Activated CD8-positive, alpha-beta T cell treated with anti-CD3 and anti-CD28 coated beads for 36 hours (primary cell): ENCODE measurements at regions of chr19 and their contacts with region 1.

Region 1: DNA sequence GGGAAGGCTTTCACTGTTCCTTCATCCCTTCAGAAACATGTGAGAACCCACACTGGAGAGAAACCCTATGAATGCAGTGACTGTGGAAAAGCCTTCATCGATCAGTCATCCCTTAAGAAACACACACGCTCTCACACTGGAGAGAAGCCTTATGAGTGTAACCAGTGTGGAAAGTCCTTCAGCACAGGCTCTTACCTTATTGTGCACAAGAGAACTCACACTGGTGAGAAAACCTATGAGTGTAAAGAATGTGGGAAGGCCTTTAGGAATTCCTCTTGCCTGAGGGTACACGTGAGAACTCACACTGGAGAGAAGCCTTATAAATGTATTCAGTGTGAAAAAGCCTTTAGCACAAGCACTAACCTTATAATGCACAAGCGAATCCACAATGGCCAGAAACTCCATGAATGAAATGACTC is 18.6 kb downstream of the ZNF177 start:
- DNase-seq: no peak
- ATAC-seq: no peak
- H3K4me3 Mint-ChIP-seq: no peak overlapping the region
- H3K27ac Mint-ChIP-seq: no peak overlapping the region
- H3K4me1 Mint-ChIP-seq: no peaks in the 10 kb centered on the region
- H3K27me3 Mint-ChIP-seq: no peaks in the 10 kb centered on the region
- CTCF ChIP-seq: no peak

Region 2: DNA sequence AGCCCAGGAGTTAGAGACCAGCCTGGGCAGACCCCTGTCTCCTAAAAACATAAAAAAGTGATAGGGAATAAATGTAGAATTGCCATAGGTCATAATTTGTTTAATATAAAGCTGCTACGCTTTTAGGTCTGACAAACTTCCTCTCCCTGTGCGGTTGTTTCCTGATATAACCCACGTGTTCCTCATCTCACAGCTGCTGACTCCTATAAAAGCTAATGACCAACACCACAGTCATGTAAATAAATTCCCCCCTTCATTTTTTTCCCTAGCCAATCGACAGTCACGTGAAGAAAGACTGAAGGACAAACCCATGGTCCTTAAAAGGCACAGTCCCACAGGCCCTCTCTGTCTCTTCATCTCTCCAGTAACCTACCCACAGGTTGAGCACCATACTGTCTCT is 26.5 kb after region 1 on chr19:
- CTCF ChIA-PET with region 1: no interaction called
- POLR2A ChIA-PET with region 1: no interaction called
- intact Hi-C with region 1: loop called (anchors 2 kb)
- DNase-seq: no peak
- ATAC-seq: no peak
- H3K4me3 Mint-ChIP-seq: peak overlapping the region; percentile 76
- H3K27ac Mint-ChIP-seq: no peak overlapping the region
- H3K4me1 Mint-ChIP-seq: peaks cover 9% of the 10 kb centered on the region
- H3K27me3 Mint-ChIP-seq: no peaks in the 10 kb centered on the region
- CTCF ChIP-seq: no peak

Region 3: GRCh38 chr19:9721861-9722260 is 340.5 kb after region 1 on chr19:
- CTCF ChIA-PET with region 1: no interaction called
- POLR2A ChIA-PET with region 1: no interaction called
- intact Hi-C with region 1: no loop called
- DNase-seq: peak; percentile 24
- ATAC-seq: peak; percentile 45
- H3K4me3 Mint-ChIP-seq: peak overlapping the region; percentile 9
- H3K27ac Mint-ChIP-seq: peak overlapping the region; percentile 54
- H3K4me1 Mint-ChIP-seq: peaks cover 7% of the 10 kb centered on the region
- H3K27me3 Mint-ChIP-seq: peaks cover 7% of the 10 kb centered on the region
- CTCF ChIP-seq: no peak